WTC11 (cell line): ENCODE measurements at regions of chr18 and their contacts with region 1.

Region 1: GRCh38 chr18:59988098-59988706 is 88.4 kb downstream of the PMAIP1 start:
- DNase-seq: peak; percentile 50
- ATAC-seq: peak; percentile 48; the same call in 1 of the 2 replicates
- H3K4me3 Mint-ChIP-seq: no peak overlapping the region
- H3K27ac Mint-ChIP-seq: no peak overlapping the region
- H3K4me1 Mint-ChIP-seq: no peaks in the 10 kb centered on the region
- H3K27me3 Mint-ChIP-seq: no peaks in the 10 kb centered on the region
- CTCF ChIP-seq: peak; percentile 82

Region 2: DNA sequence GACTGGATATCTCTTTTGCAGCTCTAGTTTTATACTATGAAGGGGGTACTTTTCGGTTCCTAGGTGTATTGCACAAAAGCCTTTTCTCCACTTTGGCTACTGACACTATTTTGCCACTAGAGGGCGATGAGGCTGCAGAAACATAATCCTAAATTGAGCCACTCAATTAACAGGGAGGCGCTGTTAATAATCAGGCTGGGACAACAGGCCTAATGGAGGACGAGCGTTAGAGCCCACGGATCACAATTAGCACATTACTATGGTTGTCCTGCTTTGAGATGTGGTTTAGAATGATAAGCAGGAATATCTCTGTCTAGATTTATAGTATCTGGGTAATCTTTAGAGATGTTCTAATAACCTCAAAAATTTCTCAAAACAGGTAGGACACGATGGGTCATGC is 150.6 kb before region 1 on chr18:
- CTCF ChIA-PET with region 1: interaction called, 15 read pairs
- POLR2A ChIA-PET with region 1: no interaction called
- DNase-seq: peak; percentile 57
- ATAC-seq: peak; percentile 58
- H3K4me3 Mint-ChIP-seq: no peak overlapping the region
- H3K27ac Mint-ChIP-seq: no peak overlapping the region
- H3K4me1 Mint-ChIP-seq: peaks cover 43% of the 10 kb centered on the region
- H3K27me3 Mint-ChIP-seq: no peaks in the 10 kb centered on the region; the same call in 1 of the 2 replicates
- CTCF ChIP-seq: peak; percentile 87

Region 3: GRCh38 chr18:60003610-60004185 is 15.5 kb after region 1 on chr18:
- CTCF ChIA-PET with region 1: interaction called, 10 read pairs
- POLR2A ChIA-PET with region 1: no interaction called
- DNase-seq: peak; percentile 28
- ATAC-seq: peak; percentile 87
- H3K4me3 Mint-ChIP-seq: no peak overlapping the region
- H3K27ac Mint-ChIP-seq: no peak overlapping the region
- H3K4me1 Mint-ChIP-seq: no peaks in the 10 kb centered on the region
- H3K27me3 Mint-ChIP-seq: no peaks in the 10 kb centered on the region
- CTCF ChIP-seq: no peak

Region 4: DNA sequence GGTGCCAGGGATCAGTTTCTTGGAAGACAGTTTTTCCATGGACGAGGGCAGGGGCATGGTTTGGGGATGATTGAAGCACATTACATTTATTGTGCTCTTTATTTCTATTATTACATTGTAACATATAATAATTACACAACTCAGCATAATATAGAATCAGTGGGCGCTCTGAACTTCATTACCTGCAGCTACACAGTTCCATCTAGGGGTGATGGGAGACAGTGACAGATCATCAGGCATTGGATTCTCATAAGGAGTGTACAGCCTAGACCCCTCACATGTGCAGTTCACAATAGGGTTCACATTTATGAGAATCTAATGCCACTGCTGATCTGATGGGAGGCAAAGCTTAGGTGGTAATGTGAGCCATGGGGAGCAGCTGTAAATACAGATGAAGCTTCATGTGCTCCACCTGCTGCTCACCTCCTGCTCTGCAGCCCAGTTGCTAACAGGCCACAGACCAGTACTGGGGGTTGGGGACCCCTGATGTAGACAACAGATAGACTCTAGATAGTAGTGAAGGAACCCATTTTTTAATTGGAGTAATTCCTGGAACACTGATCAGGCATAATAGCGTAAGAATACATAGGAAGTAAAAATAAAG is 425.8 kb after region 1 on chr18:
- CTCF ChIA-PET with region 1: interaction called, 30 read pairs
- POLR2A ChIA-PET with region 1: no interaction called
- DNase-seq: peak; percentile 68
- ATAC-seq: peak; percentile 97
- H3K4me3 Mint-ChIP-seq: no peak overlapping the region
- H3K27ac Mint-ChIP-seq: no peak overlapping the region
- H3K4me1 Mint-ChIP-seq: no peaks in the 10 kb centered on the region
- H3K27me3 Mint-ChIP-seq: no peaks in the 10 kb centered on the region
- CTCF ChIP-seq: peak; percentile 49; the same call in 1 of the 2 replicates

Region 5: DNA sequence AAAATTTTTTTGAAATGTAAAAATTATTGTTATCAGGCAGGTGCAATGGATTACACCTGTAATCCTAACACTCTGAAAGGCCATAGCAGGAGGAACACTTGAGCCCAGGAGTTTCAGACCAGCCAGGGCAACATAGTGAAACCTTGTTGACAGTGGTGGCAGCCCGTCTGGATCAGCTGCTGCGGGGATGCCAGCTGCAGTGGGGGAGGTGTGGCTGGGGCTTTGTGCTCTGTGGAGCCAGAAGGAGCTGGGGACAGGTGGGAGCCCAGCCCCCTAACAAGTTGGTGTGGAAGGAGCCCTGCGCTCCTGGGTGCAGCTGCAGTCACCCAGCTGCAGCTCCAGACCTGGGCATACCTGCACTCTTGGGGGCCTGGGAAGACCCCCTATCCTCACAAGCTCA is 566.8 kb after region 1 on chr18:
- CTCF ChIA-PET with region 1: interaction called, 15 read pairs
- POLR2A ChIA-PET with region 1: no interaction called
- DNase-seq: no peak
- ATAC-seq: no peak
- H3K4me3 Mint-ChIP-seq: no peak overlapping the region
- H3K27ac Mint-ChIP-seq: no peak overlapping the region
- H3K4me1 Mint-ChIP-seq: peaks cover 6% of the 10 kb centered on the region
- H3K27me3 Mint-ChIP-seq: no peaks in the 10 kb centered on the region
- CTCF ChIP-seq: no peak